T-cell (primary cell): ENCODE measurements at regions of chr11 and their contacts with region 1.

Region 1: GRCh38 chr11:94553938-94554337 is 10.2 kb downstream of the FUT4 start:
- DNase-seq: no peak
- ATAC-seq: no peak
- H3K4me3 ChIP-seq: no peak overlapping the region
- H3K4me3 Mint-ChIP-seq: no peak overlapping the region
- H3K27ac ChIP-seq: no peak overlapping the region
- H3K27ac Mint-ChIP-seq: no peak overlapping the region
- H3K4me1 ChIP-seq: no peaks in the 10 kb centered on the region
- H3K4me1 Mint-ChIP-seq: peaks cover 10 to 14% (median 10%) of the 10 kb centered on the region in 3 donors
- H3K27me3 ChIP-seq: no peaks in the 10 kb centered on the region
- H3K27me3 Mint-ChIP-seq: no peaks in the 10 kb centered on the region

Region 2: DNA sequence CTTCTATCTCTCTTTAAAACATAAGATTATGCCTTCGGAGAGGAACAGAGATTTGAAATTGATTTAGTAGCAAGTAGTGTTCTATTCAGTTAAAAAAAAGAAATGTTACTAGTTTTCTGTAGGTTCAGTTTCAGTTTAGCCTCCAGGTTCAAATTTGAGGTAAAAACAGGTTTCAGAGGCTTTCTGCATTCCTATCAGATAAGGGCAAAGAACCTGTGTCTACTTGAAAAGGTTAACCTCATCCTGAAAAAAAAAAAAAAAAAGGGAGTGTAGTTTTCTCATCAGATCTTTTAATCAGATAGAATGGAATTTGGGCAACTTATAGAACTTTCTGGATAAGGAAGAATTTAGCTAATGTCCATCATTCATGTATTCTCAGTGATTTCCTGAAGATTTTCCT is 29.6 kb before region 1 on chr11:
- CTCF ChIA-PET with region 1: interaction called in 1 of 2 experiments, 10 read pairs
- POLR2A ChIA-PET with region 1: no interaction called
- DNase-seq: no peak
- ATAC-seq: no peak
- H3K4me3 ChIP-seq: no peak overlapping the region
- H3K4me3 Mint-ChIP-seq: no peak overlapping the region
- H3K27ac ChIP-seq: no peak overlapping the region
- H3K27ac Mint-ChIP-seq: no peak overlapping the region
- H3K4me1 ChIP-seq: no peaks in the 10 kb centered on the region
- H3K4me1 Mint-ChIP-seq: no peaks in the 10 kb centered on the region
- H3K27me3 ChIP-seq: peaks cover 0 to 3% of the 10 kb centered on the region in 2 experiments
- H3K27me3 Mint-ChIP-seq: peaks cover 21 to 29% of the 10 kb centered on the region in 2 donors

Region 3: DNA sequence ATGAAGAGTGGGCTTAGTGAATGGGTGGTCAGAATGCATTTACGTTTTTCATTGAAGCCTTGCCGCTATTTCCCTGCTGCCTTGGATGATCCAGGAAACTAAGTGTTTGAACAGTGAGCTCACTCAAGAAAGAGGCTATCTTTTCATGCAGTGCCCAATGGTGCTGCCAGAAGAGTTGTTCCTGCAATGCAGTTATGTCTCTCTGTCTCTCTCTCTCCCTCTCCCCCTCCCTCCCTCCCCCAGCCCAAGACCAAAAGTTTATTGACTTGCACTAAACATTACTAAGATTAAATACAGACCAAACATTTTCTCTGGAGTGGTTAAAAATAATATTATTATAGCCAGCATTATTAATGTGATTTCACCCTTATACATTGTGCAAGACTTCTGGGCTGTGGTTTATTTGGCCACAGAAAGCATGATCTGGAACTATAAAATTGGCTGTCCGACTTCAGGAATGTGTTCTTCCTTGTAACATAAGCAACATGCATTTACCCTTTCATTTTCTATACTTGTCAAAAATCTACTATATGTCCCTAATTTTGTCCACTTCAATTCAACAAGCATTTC is 16.8 kb before region 1 on chr11:
- CTCF ChIA-PET with region 1: no interaction called
- POLR2A ChIA-PET with region 1: no interaction called
- DNase-seq: no peak
- ATAC-seq: no peak
- H3K4me3 ChIP-seq: no peak overlapping the region
- H3K4me3 Mint-ChIP-seq: no peak overlapping the region
- H3K27ac ChIP-seq: no peak overlapping the region
- H3K27ac Mint-ChIP-seq: no peak overlapping the region
- H3K4me1 ChIP-seq: no peaks in the 10 kb centered on the region
- H3K4me1 Mint-ChIP-seq: no peaks in the 10 kb centered on the region
- H3K27me3 ChIP-seq: no peaks in the 10 kb centered on the region
- H3K27me3 Mint-ChIP-seq: peaks cover 12 to 30% of the 10 kb centered on the region in 2 donors